K562 (cell line): ENCODE measurements at regions of chr9 and their contacts with region 1.

Region 1: DNA sequence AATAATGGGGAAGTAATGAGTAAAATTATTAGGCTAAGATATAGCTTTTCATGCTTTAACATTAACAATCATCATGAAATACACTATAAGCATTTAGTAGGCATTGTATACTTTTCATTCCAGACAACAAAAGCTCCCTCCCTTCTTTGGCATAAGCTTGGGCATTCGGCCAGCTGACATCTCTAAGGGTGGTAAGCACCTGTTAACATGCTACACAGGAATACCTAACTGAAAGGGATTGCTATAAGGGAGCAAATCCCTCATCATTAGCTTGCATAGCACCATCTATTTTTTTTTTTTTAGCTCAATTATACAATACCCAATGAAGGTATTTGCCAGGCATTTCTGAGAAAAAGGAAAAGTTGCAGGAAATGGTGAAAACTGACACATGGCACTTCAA is 16.6 kb downstream of the STRBP start:
- DNase-seq: no peak
- ATAC-seq: no peak
- H3K4me3 ChIP-seq: no peak overlapping the region
- H3K27ac ChIP-seq: no peak overlapping the region
- H3K4me1 ChIP-seq: peaks cover 3 to 13% of the 10 kb centered on the region in 2 experiments; a peak in 4 of 5 replicates
- H3K27me3 ChIP-seq: no peaks in the 10 kb centered on the region
- CTCF ChIP-seq: no peak
- EP300 ChIP-seq: no peak
- POLR2A ChIP-seq: no peak
- RAD21 ChIP-seq: no peak

Region 2: DNA sequence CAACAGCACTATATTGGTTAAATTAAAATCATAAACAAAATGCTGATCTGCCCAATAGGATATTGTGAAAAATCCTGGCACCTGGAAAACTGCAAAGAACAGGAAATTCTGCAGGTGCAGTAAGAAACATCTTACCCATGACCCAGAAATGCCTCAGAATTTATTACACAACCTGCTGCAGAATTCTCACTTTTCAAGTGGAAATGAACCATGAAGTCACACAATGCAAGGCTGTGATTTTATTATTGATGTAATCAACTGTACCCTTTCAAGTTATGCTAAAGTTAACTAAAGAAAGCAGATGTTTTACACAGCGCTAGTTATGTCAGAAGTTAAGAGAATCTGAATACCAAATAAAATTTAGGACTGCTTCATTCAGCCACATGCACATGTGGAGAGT is 10.6 kb after region 1 on chr9:
- CTCF ChIA-PET with region 1: no interaction called
- POLR2A ChIA-PET with region 1: interaction called, 30 read pairs
- in situ Hi-C with region 1: no loop called
- intact Hi-C with region 1: no loop called
- DNase-seq: no peak
- ATAC-seq: no peak
- H3K4me3 ChIP-seq: no peak overlapping the region
- H3K27ac ChIP-seq: no peak overlapping the region
- H3K4me1 ChIP-seq: peaks cover 9 to 32% of the 10 kb centered on the region in 2 experiments
- H3K27me3 ChIP-seq: no peaks in the 10 kb centered on the region
- CTCF ChIP-seq: no peak
- EP300 ChIP-seq: no peak
- POLR2A ChIP-seq: no peak
- RAD21 ChIP-seq: no peak

Region 3: DNA sequence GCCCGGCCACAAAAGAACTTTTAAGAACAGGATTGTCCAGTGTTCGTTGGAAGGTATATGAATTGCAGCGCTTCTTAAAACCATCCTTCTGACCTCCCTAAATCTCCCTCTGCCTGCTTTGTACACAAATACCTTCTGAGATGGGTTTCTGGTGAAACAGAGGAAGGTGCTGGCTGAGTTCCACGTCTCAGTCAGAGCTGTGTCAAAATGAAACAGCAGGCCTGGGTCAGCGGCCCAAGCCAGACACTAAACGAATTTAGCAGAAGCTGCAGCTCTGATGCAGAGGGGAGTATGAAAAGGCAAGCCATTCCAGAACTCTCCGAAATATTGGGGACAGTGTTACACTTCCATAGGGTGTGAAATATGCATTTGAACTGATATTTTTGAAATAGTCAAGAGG is 66.5 kb after region 1 on chr9:
- CTCF ChIA-PET with region 1: no interaction called
- POLR2A ChIA-PET with region 1: no interaction called
- in situ Hi-C with region 1: no loop called
- intact Hi-C with region 1: no loop called
- DNase-seq: no peak
- ATAC-seq: no peak; the same call in 2 of the 3 replicates
- H3K4me3 ChIP-seq: no peak overlapping the region
- H3K27ac ChIP-seq: no peak overlapping the region
- H3K4me1 ChIP-seq: peaks cover 14 to 15% of the 10 kb centered on the region in 2 experiments; a peak in 4 of 5 replicates
- H3K27me3 ChIP-seq: no peaks in the 10 kb centered on the region
- CTCF ChIP-seq: no peak
- EP300 ChIP-seq: no peak
- POLR2A ChIP-seq: no peak
- RAD21 ChIP-seq: no peak

Region 4: DNA sequence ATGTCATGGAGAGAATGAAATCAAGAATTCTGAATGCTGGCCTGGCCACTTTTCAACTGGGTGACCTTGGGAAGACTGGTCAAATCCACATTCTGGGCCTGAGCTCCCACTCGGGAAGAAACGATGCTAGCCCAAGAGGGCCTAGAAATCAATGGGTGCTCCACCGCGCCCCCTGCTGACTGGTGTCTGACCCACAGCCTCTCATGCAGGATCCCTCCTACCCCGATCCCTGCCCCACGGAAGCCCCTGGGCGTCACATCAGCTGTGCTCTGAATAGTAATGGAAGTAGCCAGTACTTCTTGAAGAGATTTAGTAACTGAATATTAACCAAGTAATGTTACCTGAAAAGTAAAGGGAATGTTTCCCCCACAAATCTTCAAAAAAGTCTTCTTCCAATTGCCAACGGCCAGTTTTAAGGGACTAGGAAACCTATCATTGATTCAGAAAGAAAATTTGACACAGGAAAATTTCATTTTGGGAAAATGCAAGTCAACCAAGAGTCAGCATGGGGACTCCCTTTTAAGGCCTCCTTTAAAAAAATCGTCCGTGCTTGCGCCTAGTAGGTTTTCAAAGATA is 148.2 kb after region 1 on chr9:
- CTCF ChIA-PET with region 1: no interaction called
- POLR2A ChIA-PET with region 1: no interaction called
- in situ Hi-C with region 1: no loop called
- intact Hi-C with region 1: no loop called
- DNase-seq: peak; percentile 70 to 87 (median 84)
- ATAC-seq: peak; percentile 84
- H3K4me3 ChIP-seq: no peak overlapping the region
- H3K27ac ChIP-seq: no peak overlapping the region
- H3K4me1 ChIP-seq: peaks cover 12 to 18% of the 10 kb centered on the region in 2 experiments; a peak in 4 of 5 replicates
- H3K27me3 ChIP-seq: no peaks in the 10 kb centered on the region
- CTCF ChIP-seq: peak; percentile 69 to 87 (median 70)
- EP300 ChIP-seq: no peak
- POLR2A ChIP-seq: no peak
- RAD21 ChIP-seq: peak in 1 of 2 experiments; percentile 35; a peak in 1 of 4 replicates